ENCODE measurements at regions of chr15 and their contacts with region 1.

Region 1: GRCh38 chr15:81256916-81257315 is 60.2 kb downstream of the IL16 start:
- DNase-seq: no peak
- ATAC-seq: peak in 1 of 2 donors; percentile 66

Region 2: DNA sequence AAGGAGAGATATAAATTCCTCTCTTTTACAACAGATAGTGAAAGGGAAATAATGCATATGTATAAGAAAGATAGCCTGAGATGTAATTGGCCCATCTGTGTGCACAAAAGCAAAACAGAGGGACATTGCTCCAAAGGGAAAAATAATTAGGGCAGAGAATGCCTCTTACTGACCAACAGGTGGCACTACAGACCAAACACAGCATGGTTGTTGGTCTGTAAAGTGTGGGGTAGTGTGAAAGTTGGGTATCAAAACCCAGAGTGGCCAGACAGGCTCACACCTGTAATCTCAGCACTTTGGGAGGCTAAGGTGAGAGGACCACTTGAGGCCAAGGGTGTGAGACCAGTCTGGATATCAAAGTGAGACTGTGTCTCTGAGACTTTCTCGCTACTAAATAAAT is 260.7 kb before region 1 on chr15:
- intact Hi-C with region 1: loop called in 1 of 2 experiments (anchors 5 kb)
- DNase-seq: no peak
- ATAC-seq: no peak

Measured in left cardiac atrium (tissue), 4 donors.